Panc1 (cell line): ENCODE measurements at regions of chr17 and their contacts with region 1.

Region 1: DNA sequence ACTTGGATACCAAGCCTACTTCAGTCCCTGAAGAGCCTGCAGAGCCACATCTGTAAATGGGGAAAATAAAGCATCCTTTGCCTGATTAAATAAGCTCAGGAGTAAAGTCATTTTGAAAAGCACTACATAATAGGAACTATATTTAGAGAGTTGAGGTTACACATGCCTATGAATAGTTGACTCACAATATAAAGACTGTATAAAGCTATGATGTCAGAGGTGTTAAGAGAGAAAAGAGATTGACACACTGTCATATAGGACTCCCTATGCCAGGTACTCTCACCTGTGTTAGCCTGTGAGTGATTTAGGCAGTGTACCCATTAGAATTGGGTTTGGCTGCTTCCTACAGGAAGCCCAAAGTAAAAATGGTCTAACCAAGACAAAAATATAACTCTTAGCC is 87.7 kb upstream of the CRHR1 start:
- DNase-seq: no peak
- ATAC-seq: no peak
- H3K4me3 ChIP-seq: no peak overlapping the region
- H3K27ac ChIP-seq: no peak overlapping the region
- H3K4me1 ChIP-seq: no peaks in the 10 kb centered on the region
- H3K27me3 ChIP-seq: no peaks in the 10 kb centered on the region; the same call in 1 of the 2 replicates
- CTCF ChIP-seq: no peak

Region 2: DNA sequence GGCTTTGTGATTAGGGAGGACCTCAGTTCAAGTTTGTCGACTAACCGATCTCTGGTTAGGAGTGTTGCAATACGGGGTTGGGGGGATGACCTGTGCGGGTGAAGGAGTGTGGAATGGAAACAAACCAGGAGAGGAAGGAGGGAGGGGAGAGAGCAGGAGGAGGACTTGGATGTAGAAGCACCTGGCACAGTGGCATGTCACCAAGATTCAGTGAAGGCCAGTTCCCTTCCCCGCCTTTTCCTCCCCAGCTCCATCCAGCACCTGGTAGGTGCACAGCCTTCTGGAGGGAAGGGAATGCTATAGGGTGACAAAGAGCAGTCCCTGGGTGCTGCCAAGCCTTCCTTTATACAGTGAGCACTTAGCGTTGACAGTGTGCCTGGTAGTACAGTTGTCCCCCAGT is 19.7 kb before region 1 on chr17:
- CTCF ChIA-PET with region 1: no interaction called
- POLR2A ChIA-PET with region 1: interaction called, 12 read pairs
- in situ Hi-C with region 1: no loop called
- intact Hi-C with region 1: no loop called
- DNase-seq: no peak
- ATAC-seq: no peak
- H3K4me3 ChIP-seq: no peak overlapping the region
- H3K27ac ChIP-seq: no peak overlapping the region
- H3K4me1 ChIP-seq: no peaks in the 10 kb centered on the region
- H3K27me3 ChIP-seq: 0 out of 2 replicates have a peak, but pooled peaks cover 2% of the 10 kb centered on the region
- CTCF ChIP-seq: no peak